Posterior vena cava (tissue), 2 donors: ENCODE measurements at regions of chr15 and their contacts with region 1.

Region 1: DNA sequence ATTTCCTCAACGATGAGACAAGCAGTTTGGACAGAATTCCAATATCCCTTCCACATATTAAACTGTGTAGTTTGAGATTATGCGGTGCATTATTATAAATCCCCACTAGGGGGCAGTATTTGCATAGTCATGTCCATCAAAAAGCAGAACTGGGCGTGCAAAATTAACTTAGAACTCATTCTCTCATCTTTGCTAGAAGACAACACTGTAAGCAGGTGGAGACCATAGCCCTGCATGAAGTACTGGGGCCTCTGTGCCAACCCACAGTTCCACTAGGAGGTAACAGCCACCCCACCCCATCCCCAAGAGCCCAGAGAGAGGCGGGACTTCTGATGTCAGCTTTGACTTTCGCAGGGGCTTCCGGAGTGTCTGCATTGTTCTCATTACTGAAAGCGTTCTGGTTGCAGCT is 106.6 kb upstream of the TMC3 start:
- DNase-seq: no peak

Region 2: DNA sequence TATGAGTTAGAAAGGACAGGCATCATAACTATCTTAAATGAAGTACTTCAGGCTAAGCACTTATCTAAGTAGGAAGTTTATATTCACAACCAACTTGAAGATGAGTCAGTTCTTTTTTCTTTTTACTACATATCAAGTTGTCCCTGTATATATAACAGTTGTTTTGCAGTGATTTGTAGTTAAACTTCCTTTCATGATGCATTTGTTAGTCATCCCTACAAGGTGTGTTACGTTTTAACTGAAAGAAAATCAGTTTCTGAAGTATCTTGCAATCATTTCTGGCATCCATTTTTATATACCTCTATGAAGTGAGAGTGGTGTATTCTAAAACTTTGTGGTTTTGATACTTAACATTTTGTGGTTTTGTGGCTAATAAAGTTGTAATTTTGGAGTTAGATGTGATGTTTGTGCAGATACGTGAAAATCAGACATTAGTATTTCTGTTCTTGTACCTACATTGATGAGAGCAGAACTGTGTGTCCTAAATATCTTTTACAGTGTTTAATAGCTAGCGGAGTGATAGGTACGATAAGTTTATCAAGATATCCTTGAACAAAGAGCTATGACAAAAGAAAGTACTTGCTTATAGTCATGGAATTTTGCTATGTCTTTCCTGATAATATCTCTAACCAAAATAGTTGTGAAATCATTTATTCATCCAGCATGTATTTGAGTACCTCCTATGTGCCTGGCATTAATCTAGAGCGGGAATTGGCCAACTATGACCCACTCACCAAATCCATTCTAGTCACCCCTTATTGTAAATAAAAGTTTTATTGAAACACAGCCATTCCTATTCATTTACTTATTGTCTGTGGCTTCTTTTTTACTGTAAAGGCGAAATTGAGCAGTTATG is 1374.8 kb before region 1 on chr15:
- intact Hi-C with region 1: no loop called
- DNase-seq: no peak

Region 3: DNA sequence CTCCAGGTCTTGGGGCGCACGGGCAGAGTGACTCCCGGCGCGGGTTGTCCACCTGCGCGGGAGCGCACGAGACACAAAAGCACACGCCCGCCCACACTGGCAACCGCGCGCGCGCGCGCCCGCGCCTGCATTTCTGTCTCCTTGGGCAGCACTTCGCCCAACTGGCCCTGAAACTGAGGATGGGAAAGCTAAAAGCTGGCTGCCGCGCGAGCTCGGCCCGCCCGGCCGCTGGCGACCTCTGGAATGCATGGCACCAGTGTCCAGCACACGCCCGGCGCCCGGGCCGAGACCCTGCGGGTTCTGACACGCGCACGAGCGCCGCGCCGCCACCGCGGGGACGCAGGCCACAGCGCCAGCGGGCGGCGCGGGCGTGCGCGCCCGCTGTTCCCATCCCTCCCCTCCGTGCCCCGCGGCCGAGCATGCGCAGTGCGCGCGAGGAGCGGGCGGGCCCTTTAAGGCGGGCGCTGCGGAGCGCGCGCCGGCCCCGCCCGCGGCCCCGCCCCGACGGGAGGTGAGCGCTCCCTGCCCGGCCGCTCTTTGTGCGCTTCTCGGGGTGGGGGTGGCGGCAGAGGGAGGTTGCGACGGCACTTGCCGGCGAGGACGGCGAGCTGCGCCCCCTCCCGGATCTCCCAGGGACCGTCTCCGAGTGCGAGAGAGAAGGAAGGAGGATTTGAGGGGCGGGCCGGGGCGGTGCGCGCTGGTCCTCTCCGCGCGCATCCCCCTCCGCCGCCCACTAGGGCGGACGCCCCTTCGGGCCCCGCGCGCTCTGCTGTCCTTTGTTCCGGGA is 566.2 kb after region 1 on chr15:
- intact Hi-C with region 1: loop called in 1 of 2 experiments (anchors 5 kb)
- DNase-seq: peak; percentile 96

Region 4: GRCh38 chr15:82139823-82140268 is 659.2 kb after region 1 on chr15:
- intact Hi-C with region 1: loop called in 1 of 2 experiments (anchors 10 kb)
- DNase-seq: no peak